ENCODE measurements at regions of chr4 and their contacts with region 1.

Region 1: GRCh38 chr4:175891851-175892250 is 79.8 kb upstream of the GPM6A start:
- DNase-seq: no peak
- H3K4me3 ChIP-seq: no peak overlapping the region
- H3K27ac ChIP-seq: no peak overlapping the region
- H3K4me1 ChIP-seq: no peaks in the 10 kb centered on the region
- H3K27me3 ChIP-seq: no peaks in the 10 kb centered on the region
- CTCF ChIP-seq: no peak

Region 2: GRCh38 chr4:174764105-174764729 is 1127.6 kb before region 1 on chr4:
- intact Hi-C with region 1: loop called (anchors 10 kb)
- DNase-seq: no peak
- H3K4me3 ChIP-seq: no peak overlapping the region
- H3K27ac ChIP-seq: no peak overlapping the region
- H3K4me1 ChIP-seq: no peaks in the 10 kb centered on the region
- H3K27me3 ChIP-seq: no peaks in the 10 kb centered on the region
- CTCF ChIP-seq: peak; percentile 24

Region 3: GRCh38 chr4:176611951-176612350 is 720.1 kb after region 1 on chr4:
- intact Hi-C with region 1: no loop called
- DNase-seq: no peak
- H3K4me3 ChIP-seq: no peak overlapping the region
- H3K27ac ChIP-seq: no peak overlapping the region
- H3K4me1 ChIP-seq: no peaks in the 10 kb centered on the region
- H3K27me3 ChIP-seq: no peaks in the 10 kb centered on the region
- CTCF ChIP-seq: no peak

Measured in colonic mucosa (tissue), 4 donors.